ENCODE measurements at regions of chr2 and their contacts with region 1.

Region 1: GRCh38 chr2:190328573-190329147 is 9.0 kb upstream of the HIBCH start:
- DNase-seq: no peak
- H3K4me3 Mint-ChIP-seq: no peak overlapping the region
- H3K27ac Mint-ChIP-seq: no peak overlapping the region
- H3K4me1 Mint-ChIP-seq: peaks cover 5% of the 10 kb centered on the region
- H3K27me3 Mint-ChIP-seq: no peaks in the 10 kb centered on the region
- CTCF ChIP-seq: no peak

Region 2: DNA sequence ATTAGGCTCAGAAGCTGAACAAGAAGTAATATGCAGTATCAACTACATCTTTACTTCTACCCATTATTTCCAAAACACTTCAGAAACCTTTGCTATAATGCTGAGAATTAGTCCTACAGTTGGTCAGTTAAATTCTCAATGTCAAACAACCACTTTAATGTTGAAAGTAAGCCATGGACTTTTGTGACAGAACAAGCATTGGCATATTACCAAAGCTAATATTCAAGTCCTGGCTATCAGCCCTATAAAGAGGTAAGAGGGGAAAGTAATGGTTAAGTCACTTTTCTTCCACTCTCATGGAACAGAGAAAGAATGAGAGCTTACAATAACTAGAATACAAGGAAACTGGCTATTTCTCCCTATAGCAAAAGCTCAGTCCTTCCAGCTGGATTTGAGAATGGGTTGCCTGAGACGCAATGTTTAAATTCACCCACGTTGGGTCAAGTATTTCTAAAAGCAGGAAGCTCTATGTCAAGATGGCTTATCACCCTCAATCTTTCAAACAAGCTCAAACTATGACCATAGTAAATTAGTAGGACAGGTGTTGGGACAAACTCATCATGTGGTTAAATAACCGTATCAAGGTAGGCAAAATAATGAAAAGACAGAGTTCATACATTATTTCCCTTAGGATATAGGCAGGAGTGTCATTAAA is 48.1 kb after region 1 on chr2:
- CTCF ChIA-PET with region 1: no interaction called
- intact Hi-C with region 1: loop called (anchors 2 kb)
- DNase-seq: no peak
- H3K4me3 Mint-ChIP-seq: no peak overlapping the region
- H3K27ac Mint-ChIP-seq: no peak overlapping the region
- H3K4me1 Mint-ChIP-seq: no peaks in the 10 kb centered on the region
- H3K27me3 Mint-ChIP-seq: no peaks in the 10 kb centered on the region
- CTCF ChIP-seq: no peak

Region 3: GRCh38 chr2:190511104-190511503 is 182.4 kb after region 1 on chr2:
- CTCF ChIA-PET with region 1: no interaction called
- intact Hi-C with region 1: loop called (anchors 5 kb)
- DNase-seq: peak; percentile 32
- H3K4me3 Mint-ChIP-seq: no peak overlapping the region
- H3K27ac Mint-ChIP-seq: no peak overlapping the region
- H3K4me1 Mint-ChIP-seq: peaks cover 12% of the 10 kb centered on the region
- H3K27me3 Mint-ChIP-seq: no peaks in the 10 kb centered on the region
- CTCF ChIP-seq: peak; percentile 37

Region 4: GRCh38 chr2:190726255-190726654 is 397.6 kb after region 1 on chr2:
- CTCF ChIA-PET with region 1: no interaction called
- intact Hi-C with region 1: no loop called
- DNase-seq: no peak
- H3K4me3 Mint-ChIP-seq: no peak overlapping the region
- H3K27ac Mint-ChIP-seq: no peak overlapping the region
- H3K4me1 Mint-ChIP-seq: peaks cover 5% of the 10 kb centered on the region
- H3K27me3 Mint-ChIP-seq: no peaks in the 10 kb centered on the region
- CTCF ChIP-seq: no peak

Measured in Calu3 (cell line).